CD4-positive, alpha-beta memory T cell (primary cell): ENCODE measurements at regions of chr7 and their contacts with region 1.

Region 1: GRCh38 chr7:26167301-26167934 is 15.4 kb downstream of the NFE2L3 start:
- DNase-seq: peak in 2 of 5 donors; percentile 33 to 70
- H3K4me3 ChIP-seq: no peak overlapping the region
- H3K4me3 Mint-ChIP-seq: peak overlapping the region in 6 of 8 donors; percentile 11 to 70 (median 40)
- H3K27ac ChIP-seq: peak overlapping the region; percentile 39
- H3K27ac Mint-ChIP-seq: peak overlapping the region; percentile 44 to 94 (median 85)
- H3K4me1 ChIP-seq: peaks cover 20% of the 10 kb centered on the region
- H3K4me1 Mint-ChIP-seq: peaks cover 14 to 29% (median 23%) of the 10 kb centered on the region in 4 donors
- H3K27me3 ChIP-seq: no peaks in the 10 kb centered on the region
- H3K27me3 Mint-ChIP-seq: no peaks in the 10 kb centered on the region

Region 2: GRCh38 chr7:26180792-26181198 is 13.4 kb after region 1 on chr7:
- CTCF ChIA-PET with region 1: interaction called, 5 read pairs
- POLR2A ChIA-PET with region 1: interaction called, 13 read pairs
- intact Hi-C with region 1: no loop called
- DNase-seq: no peak
- H3K4me3 ChIP-seq: no peak overlapping the region
- H3K4me3 Mint-ChIP-seq: no peak overlapping the region
- H3K27ac ChIP-seq: no peak overlapping the region
- H3K27ac Mint-ChIP-seq: peak overlapping the region in 4 of 7 donors; percentile 1 to 81 (median 20)
- H3K4me1 ChIP-seq: peaks cover 34% of the 10 kb centered on the region
- H3K4me1 Mint-ChIP-seq: peaks cover 31 to 68% (median 44%) of the 10 kb centered on the region in 4 donors
- H3K27me3 ChIP-seq: no peaks in the 10 kb centered on the region
- H3K27me3 Mint-ChIP-seq: no peaks in the 10 kb centered on the region

Region 3: DNA sequence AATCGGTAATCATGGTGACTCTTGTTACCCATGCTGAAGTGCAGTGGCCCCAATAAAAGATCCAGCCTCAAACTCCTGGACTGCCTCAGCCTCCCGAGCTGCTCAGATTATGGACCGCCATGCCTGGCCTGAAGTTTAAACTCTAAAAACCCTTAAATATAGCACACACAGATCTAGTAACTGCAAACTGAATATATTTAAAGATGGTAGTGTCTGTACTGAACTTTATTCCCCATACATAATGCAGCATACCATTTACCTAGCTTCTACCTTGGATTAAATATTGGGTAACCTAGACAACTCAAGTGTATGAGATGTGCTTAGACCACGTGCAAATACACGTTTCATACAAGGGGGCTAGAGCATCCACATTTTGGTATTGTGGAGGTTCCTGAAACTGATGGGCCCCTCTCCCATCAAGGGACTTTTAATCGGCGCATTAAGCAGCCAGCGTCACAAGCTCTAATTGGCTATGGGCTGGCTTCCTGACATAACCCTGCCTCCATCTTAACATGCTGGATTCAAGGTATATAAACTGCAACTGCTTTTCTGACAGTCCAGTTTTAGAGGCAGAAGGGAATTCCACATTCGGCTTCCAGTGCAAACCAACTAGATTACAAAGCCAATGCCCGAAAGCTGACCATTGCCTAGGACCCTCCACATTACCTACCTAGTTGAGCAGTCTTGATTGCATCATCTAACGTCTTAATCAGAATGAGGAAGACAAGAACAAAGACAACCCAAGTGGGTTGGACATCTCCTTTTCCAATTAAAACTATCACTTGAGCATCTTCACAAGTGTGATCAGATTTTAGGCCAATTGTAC is 20.2 kb after region 1 on chr7:
- CTCF ChIA-PET with region 1: interaction called, 3 read pairs
- POLR2A ChIA-PET with region 1: interaction called, 169 read pairs
- intact Hi-C with region 1: no loop called
- DNase-seq: no peak
- H3K4me3 ChIP-seq: no peak overlapping the region
- H3K4me3 Mint-ChIP-seq: peak overlapping the region in 3 of 8 donors; percentile 7 to 55 (median 17)
- H3K27ac ChIP-seq: no peak overlapping the region
- H3K27ac Mint-ChIP-seq: peak overlapping the region; percentile 52 to 99 (median 75)
- H3K4me1 ChIP-seq: peaks cover 74% of the 10 kb centered on the region
- H3K4me1 Mint-ChIP-seq: peaks cover 51 to 90% (median 74%) of the 10 kb centered on the region in 4 donors
- H3K27me3 ChIP-seq: no peaks in the 10 kb centered on the region
- H3K27me3 Mint-ChIP-seq: no peaks in the 10 kb centered on the region

Region 4: DNA sequence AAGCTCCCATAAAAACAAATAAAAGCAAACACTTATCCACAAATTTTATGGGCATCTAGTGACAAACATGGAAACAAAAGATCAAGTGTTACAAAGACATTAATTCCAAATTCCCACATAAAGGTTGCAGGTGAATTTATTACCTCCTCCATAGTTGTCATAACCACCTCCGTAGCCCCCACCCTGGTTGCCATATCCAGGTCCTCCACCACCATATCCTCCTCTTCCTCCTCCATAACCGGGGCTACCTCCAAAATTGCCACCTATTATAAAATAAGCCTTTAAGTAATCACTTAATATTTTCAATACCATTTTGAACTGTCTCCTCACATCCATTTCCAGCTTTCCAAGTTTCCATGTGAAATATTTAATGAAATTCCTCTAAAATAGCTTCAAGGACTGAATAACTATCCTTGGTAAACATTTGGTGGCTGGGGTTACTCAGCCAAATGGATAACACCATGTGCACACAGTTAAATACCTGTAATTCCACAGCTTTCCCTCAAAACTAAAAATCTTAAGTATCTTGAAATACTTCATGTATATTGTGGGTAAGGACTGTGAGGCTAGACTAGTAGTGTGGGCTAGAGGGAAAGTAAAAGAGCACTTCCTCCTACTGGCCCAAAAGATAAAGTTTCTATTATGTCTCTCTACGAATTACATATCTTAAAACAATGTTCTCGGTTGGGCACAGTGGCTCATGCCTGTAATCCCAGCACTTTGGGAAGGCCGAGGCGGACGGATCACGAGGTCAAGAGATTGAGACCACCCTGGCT is 26.2 kb after region 1 on chr7:
- CTCF ChIA-PET with region 1: interaction called, 8 read pairs
- POLR2A ChIA-PET with region 1: interaction called, 169 read pairs
- intact Hi-C with region 1: no loop called
- DNase-seq: no peak
- H3K4me3 ChIP-seq: no peak overlapping the region
- H3K4me3 Mint-ChIP-seq: peak overlapping the region; percentile 38 to 100 (median 79)
- H3K27ac ChIP-seq: peak overlapping the region; percentile 36
- H3K27ac Mint-ChIP-seq: peak overlapping the region; percentile 38 to 99 (median 89)
- H3K4me1 ChIP-seq: peaks cover 90% of the 10 kb centered on the region
- H3K4me1 Mint-ChIP-seq: peaks cover 64 to 93% (median 75%) of the 10 kb centered on the region in 4 donors
- H3K27me3 ChIP-seq: no peaks in the 10 kb centered on the region
- H3K27me3 Mint-ChIP-seq: no peaks in the 10 kb centered on the region

Region 5: DNA sequence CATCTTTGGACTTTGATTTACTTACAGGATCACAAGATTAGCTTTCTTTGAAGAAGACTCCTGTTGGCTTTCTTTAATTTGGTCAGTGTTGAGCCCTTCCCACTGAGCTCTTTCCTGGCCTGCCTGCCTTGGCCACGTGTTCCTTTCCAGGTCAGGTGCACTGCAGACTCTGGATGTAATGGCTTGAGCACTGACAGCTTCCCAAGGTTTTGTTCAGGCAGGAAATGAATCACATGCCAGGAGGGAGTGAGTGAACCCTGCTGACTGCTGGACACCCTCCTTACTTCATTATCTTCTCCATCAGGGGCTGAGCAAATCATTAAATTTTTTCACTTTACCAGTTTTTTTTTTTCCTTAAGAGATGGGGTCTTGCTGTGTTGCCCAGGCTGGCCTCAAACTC is 154.0 kb after region 1 on chr7:
- CTCF ChIA-PET with region 1: no interaction called
- POLR2A ChIA-PET with region 1: no interaction called
- intact Hi-C with region 1: no loop called
- DNase-seq: no peak
- H3K4me3 ChIP-seq: no peak overlapping the region
- H3K4me3 Mint-ChIP-seq: no peak overlapping the region
- H3K27ac ChIP-seq: no peak overlapping the region
- H3K27ac Mint-ChIP-seq: no peak overlapping the region
- H3K4me1 ChIP-seq: no peaks in the 10 kb centered on the region
- H3K4me1 Mint-ChIP-seq: peaks cover 0 to 11% (median 3%) of the 10 kb centered on the region in 4 donors
- H3K27me3 ChIP-seq: no peaks in the 10 kb centered on the region
- H3K27me3 Mint-ChIP-seq: no peaks in the 10 kb centered on the region